Heart left ventricle (tissue), 16 donors: ENCODE measurements at regions of chr12 and their contacts with region 1.

Region 1: DNA sequence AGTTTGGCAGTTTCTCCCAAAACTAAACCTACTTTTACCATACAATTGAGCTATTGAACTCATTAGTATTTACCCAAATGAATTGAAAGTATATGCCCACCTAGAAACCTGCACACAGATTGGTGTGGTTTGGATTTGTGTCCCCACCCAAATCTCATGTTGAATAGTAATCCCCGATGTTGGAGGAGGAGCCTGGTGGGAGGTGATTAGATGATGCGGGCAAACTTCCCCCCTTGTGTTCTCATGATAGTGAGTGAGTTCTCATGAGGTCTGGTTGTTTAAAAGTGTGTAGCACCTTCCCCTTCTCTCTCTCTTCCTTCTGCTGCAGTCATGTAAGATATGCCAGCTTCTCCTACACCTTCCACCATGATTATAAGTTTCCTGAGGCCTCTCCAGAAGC is 4.0 kb upstream of the KRT6C start:
- DNase-seq: no peak
- ATAC-seq: no peak
- H3K4me3 ChIP-seq: no peak overlapping the region
- H3K27ac ChIP-seq: no peak overlapping the region
- H3K4me1 ChIP-seq: no peaks in the 10 kb centered on the region
- H3K27me3 ChIP-seq: peaks cover 0 to 4% (median 0%) of the 10 kb centered on the region in 9 donors
- CTCF ChIP-seq: no peak
- POLR2A ChIP-seq: no peak

Region 2: GRCh38 chr12:52454411-52455216 is 23.0 kb before region 1 on chr12:
- intact Hi-C with region 1: loop called in 1 of 10 experiments (anchors 2 kb)
- DNase-seq: no peak
- ATAC-seq: no peak
- H3K4me3 ChIP-seq: no peak overlapping the region
- H3K27ac ChIP-seq: no peak overlapping the region
- H3K4me1 ChIP-seq: no peaks in the 10 kb centered on the region
- H3K27me3 ChIP-seq: peaks cover 0 to 3% (median 0%) of the 10 kb centered on the region in 9 donors
- CTCF ChIP-seq: no peak
- POLR2A ChIP-seq: no peak

Region 3: GRCh38 chr12:52585946-52586345 is 108.3 kb after region 1 on chr12:
- intact Hi-C with region 1: no loop called
- DNase-seq: no peak
- ATAC-seq: no peak
- H3K4me3 ChIP-seq: no peak overlapping the region
- H3K27ac ChIP-seq: no peak overlapping the region
- H3K4me1 ChIP-seq: no peaks in the 10 kb centered on the region
- H3K27me3 ChIP-seq: peaks cover 0 to 5% (median 0%) of the 10 kb centered on the region in 9 donors
- CTCF ChIP-seq: no peak
- POLR2A ChIP-seq: no peak

Region 4: DNA sequence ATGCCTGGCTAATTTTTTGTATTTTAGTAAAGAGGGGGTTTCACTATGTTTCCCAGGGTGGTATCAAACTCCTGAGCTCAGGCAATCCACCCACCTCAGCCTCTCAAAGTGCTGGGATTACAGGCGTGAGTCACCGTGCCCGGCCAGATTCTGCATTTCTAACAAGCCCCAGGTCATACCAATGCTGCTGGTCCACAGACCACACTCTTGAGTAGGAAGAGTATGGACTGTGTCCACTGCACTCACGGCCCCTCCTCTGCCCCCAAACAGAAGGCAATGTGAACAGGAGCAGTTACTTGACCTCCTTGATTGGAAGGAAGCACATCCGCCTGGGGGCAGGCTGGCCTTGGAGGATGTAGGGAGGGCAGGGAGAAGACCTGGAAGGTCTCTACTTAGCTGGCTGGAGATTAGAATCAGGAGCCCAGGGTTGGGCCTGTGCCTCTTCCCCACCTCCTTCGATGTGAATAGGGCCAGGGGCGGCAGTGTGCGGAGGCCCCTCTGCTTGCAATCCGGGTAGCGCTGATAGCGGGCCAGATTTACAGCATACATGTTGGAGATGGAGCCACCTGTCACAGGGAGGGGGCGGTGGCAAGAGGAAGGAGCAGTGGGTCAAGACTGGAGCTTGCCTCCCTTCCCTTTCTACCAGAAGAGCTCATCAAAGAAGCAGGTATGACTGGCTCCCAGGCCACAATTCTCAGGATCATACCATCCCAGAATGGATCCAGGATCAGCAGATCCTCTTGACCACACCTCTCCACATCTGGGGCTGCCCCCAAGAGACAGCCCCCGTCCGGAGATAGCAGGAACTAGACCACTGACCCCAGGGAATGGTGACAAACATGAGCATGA is 693.4 kb after region 1 on chr12:
- intact Hi-C with region 1: no loop called
- DNase-seq: no peak
- ATAC-seq: no peak
- H3K4me3 ChIP-seq: no peak overlapping the region
- H3K27ac ChIP-seq: peak overlapping the region in 1 of 12 donors; percentile 30
- H3K4me1 ChIP-seq: peaks cover 0 to 6% (median 0%) of the 10 kb centered on the region in 12 donors
- H3K27me3 ChIP-seq: no peaks in the 10 kb centered on the region
- CTCF ChIP-seq: no peak
- POLR2A ChIP-seq: no peak